H1 (cell line): ENCODE measurements at regions of chr10 and their contacts with region 1.

Region 1: GRCh38 chr10:103781329-103782061 is 73.9 kb downstream of the SH3PXD2A start:
- DNase-seq: no peak
- H3K4me3 ChIP-seq: no peak overlapping the region
- H3K27ac ChIP-seq: no peak overlapping the region
- H3K4me1 ChIP-seq: peaks cover 0 to 2% (median 0%) of the 10 kb centered on the region in 4 experiments; a peak in 1 of 7 replicates
- H3K27me3 ChIP-seq: no peaks in the 10 kb centered on the region
- CTCF ChIP-seq: peak; percentile 22 to 78 (median 56)
- EP300 ChIP-seq: no peak
- POLR2A ChIP-seq: no peak
- RAD21 ChIP-seq: peak; percentile 34 to 51; a peak in 3 of 4 replicates

Region 2: GRCh38 chr10:103870516-103870915 is 89.0 kb after region 1 on chr10:
- CTCF ChIA-PET with region 1: interaction called, 10 read pairs
- POLR2A ChIA-PET with region 1: no interaction called
- DNase-seq: no peak
- H3K4me3 ChIP-seq: no peak overlapping the region
- H3K27ac ChIP-seq: no peak overlapping the region
- H3K4me1 ChIP-seq: peaks cover 0 to 8% (median 1%) of the 10 kb centered on the region in 4 experiments; a peak in 1 of 7 replicates
- H3K27me3 ChIP-seq: no peaks in the 10 kb centered on the region
- CTCF ChIP-seq: no peak
- EP300 ChIP-seq: no peak
- POLR2A ChIP-seq: no peak
- RAD21 ChIP-seq: no peak

Region 3: GRCh38 chr10:104002911-104003310 is 221.4 kb after region 1 on chr10:
- CTCF ChIA-PET with region 1: no interaction called
- POLR2A ChIA-PET with region 1: no interaction called
- DNase-seq: no peak
- H3K4me3 ChIP-seq: no peak overlapping the region
- H3K27ac ChIP-seq: no peak overlapping the region
- H3K4me1 ChIP-seq: no peaks in the 10 kb centered on the region
- H3K27me3 ChIP-seq: no peaks in the 10 kb centered on the region
- CTCF ChIP-seq: no peak
- EP300 ChIP-seq: no peak
- POLR2A ChIP-seq: no peak
- RAD21 ChIP-seq: no peak